Uterus (tissue), 4 donors: ENCODE measurements at regions of chr4 and their contacts with region 1.

Region 1: GRCh38 chr4:76511947-76512346 is 76.9 kb downstream of the SHROOM3 start:
- DNase-seq: no peak
- H3K4me3 ChIP-seq: no peak overlapping the region
- H3K27ac ChIP-seq: no peak overlapping the region
- H3K4me1 ChIP-seq: no peaks in the 10 kb centered on the region
- H3K27me3 ChIP-seq: no peaks in the 10 kb centered on the region
- CTCF ChIP-seq: no peak
- POLR2A ChIP-seq: no peak

Region 2: DNA sequence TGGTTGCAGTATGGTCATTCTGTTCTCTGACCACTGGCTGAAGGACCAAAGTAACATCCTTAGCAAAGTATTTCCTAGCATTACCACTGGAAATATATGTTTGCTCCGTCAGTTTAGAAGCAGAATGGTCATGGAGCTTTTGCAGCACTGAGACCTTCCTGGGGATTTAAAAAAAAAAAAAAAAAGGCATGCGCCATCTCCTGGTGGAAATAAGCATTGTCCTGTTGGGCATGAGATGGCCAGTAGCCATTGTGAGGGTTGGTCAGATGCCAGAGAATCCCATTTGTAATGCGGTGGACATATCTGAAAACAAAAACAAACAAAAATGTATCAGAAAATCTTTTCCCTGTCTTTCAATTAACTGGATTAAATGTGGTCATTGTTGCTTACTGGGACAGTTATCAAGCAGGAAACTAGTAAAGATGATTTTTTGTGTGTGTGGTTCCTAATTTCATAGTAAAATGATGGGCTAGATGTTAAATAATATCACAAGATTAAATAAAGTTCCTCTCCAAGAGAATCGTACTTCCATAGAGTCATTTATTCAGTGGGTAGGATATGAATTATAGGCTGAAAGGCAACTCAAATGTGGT is 246.4 kb after region 1 on chr4:
- intact Hi-C with region 1: loop called (anchors 5 kb)
- DNase-seq: no peak
- H3K4me3 ChIP-seq: no peak overlapping the region
- H3K27ac ChIP-seq: no peak overlapping the region
- H3K4me1 ChIP-seq: peaks cover 0 to 8% of the 10 kb centered on the region in 2 donors
- H3K27me3 ChIP-seq: no peaks in the 10 kb centered on the region
- CTCF ChIP-seq: peak; percentile 39 to 65 (median 60)
- POLR2A ChIP-seq: no peak